CD4-positive, alpha-beta memory T cell (primary cell): ENCODE measurements at regions of chr6 and their contacts with region 1.

Region 1: GRCh38 chr6:122471107-122472021 is at the start of gene SERINC1:
- DNase-seq: peak; percentile 90 to 95 (median 94)
- H3K4me3 ChIP-seq: peak within 1 kb of the TSS; percentile 87 to 98
- H3K4me3 Mint-ChIP-seq: peak within 1 kb of the TSS; percentile 97 to 100 (median 100)
- H3K27ac ChIP-seq: peak within 1 kb of the TSS; percentile 99
- H3K27ac Mint-ChIP-seq: peak within 1 kb of the TSS; percentile 99 to 100 (median 100)
- H3K4me1 ChIP-seq: peaks cover 53% of the 10 kb centered on the region
- H3K4me1 Mint-ChIP-seq: peaks cover 29 to 58% (median 40%) of the 10 kb centered on the region in 4 donors
- H3K27me3 ChIP-seq: no peaks in the 10 kb centered on the region
- H3K27me3 Mint-ChIP-seq: no peaks in the 10 kb centered on the region
- total RNA-seq, gene SERINC1: 142 to 144 TPM

Region 2: DNA sequence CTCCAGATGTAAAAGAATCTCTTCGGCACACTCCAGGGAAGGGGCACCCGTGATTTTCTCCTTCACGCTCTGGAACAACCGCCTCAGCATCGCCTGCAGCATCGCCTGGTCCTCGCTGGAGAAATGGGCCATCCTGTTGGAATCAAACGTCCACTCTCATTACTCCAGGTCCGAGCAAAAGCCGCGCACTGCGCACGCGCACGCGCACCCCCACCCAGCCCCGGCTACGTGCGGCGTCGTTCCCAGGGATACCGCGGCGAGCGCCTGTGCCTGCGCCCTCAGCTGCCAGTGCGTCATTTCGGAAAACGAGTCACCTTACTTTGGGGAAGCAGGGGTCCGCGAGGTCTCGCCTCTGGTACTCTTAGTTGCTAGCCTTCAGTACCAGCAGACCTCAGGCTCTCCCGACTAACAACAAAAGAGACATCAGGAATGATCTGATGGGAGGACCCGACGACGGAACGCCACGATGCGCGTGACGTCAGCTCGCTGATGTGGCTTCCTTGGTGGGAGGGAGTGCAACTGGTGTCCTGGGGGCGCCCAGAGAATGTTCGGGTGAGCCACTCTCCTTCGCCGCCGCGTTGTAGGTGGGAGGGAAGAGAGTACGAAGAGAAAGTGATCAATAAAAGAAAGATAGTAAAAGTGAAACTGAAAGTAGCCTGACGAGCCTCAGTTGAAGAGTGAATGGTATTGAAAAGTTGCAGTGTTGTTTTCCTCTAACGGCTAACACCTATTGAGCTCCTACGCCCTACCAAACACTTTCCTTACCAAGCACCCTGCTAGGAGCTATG is 1136.9 kb before region 1 on chr6 and contains the start of gene TBC1D32:
- CTCF ChIA-PET with region 1: no interaction called
- POLR2A ChIA-PET with region 1: no interaction called
- intact Hi-C with region 1: loop called (anchors 1 kb)
- DNase-seq: peak; percentile 87 to 91 (median 89)
- H3K4me3 ChIP-seq: peak within 1 kb of the TSS; percentile 91 to 96
- H3K4me3 Mint-ChIP-seq: peak within 1 kb of the TSS; percentile 93 to 99 (median 97)
- H3K27ac ChIP-seq: peak within 1 kb of the TSS; percentile 98
- H3K27ac Mint-ChIP-seq: peak within 1 kb of the TSS; percentile 95 to 100 (median 99)
- H3K4me1 ChIP-seq: peaks cover 29% of the 10 kb centered on the region
- H3K4me1 Mint-ChIP-seq: peaks cover 14 to 38% (median 23%) of the 10 kb centered on the region in 4 donors
- H3K27me3 ChIP-seq: no peaks in the 10 kb centered on the region
- H3K27me3 Mint-ChIP-seq: no peaks in the 10 kb centered on the region
- total RNA-seq, gene TBC1D32: 11.2 to 13.2 TPM

Region 3: GRCh38 chr6:122381497-122382265 is 89.7 kb before region 1 on chr6:
- CTCF ChIA-PET with region 1: interaction called, 4 read pairs
- POLR2A ChIA-PET with region 1: no interaction called
- intact Hi-C with region 1: loop called (anchors 1 kb)
- DNase-seq: peak; percentile 65 to 70 (median 68)
- H3K4me3 ChIP-seq: no peak overlapping the region
- H3K4me3 Mint-ChIP-seq: no peak overlapping the region
- H3K27ac ChIP-seq: no peak overlapping the region
- H3K27ac Mint-ChIP-seq: peak overlapping the region in 1 of 7 donors; percentile 48
- H3K4me1 ChIP-seq: no peaks in the 10 kb centered on the region
- H3K4me1 Mint-ChIP-seq: peaks cover under 1 to 4% (median 3%) of the 10 kb centered on the region in 4 donors
- H3K27me3 ChIP-seq: no peaks in the 10 kb centered on the region
- H3K27me3 Mint-ChIP-seq: peaks cover 3% of the 10 kb centered on the region in 2 donors

Region 4: DNA sequence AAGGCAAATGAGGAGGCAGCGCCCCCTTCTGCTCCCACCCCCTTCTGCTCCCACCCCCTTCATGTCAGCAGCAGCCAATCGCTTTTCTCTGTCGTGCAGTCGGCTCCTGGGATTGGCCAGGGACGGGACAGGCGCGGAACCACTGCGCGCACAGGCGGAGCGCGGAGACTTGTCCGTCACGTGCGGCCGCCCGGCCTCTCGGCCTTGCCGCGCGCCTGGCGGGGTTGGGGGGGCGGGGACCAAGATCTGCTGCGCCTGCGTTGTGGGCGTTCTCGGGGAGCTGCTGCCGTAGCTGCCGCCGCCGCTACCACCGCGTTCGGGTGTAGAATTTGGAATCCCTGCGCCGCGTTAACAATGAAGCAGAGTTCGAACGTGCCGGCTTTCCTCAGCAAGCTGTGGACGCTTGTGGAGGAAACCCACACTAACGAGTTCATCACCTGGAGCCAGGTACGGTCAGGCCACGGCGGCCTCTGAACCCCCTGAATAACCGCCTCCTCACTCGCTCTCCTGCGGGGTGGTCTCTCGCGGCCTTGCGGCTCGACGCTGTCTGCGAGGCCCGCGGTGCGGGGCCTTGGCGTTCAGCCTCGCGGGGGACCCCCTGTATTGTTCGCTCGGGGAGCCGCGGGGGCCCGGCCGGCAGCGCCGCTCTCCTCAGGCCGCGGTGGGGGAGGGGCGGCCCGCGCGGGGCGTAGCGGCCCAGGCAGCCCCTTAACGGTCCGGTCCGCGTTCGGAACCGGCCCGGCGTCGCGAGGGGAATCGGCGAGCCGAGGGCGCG is 71.8 kb before region 1 on chr6 and contains the start of gene HSF2:
- CTCF ChIA-PET with region 1: interaction called, 4 read pairs
- POLR2A ChIA-PET with region 1: interaction called, 30 read pairs
- intact Hi-C with region 1: loop called (anchors 1 kb)
- DNase-seq: peak; percentile 92 to 96 (median 94)
- H3K4me3 ChIP-seq: peak within 1 kb of the TSS; percentile 39 to 91
- H3K4me3 Mint-ChIP-seq: peak within 1 kb of the TSS; percentile 96 to 100 (median 98)
- H3K27ac ChIP-seq: peak within 1 kb of the TSS; percentile 88
- H3K27ac Mint-ChIP-seq: peak within 1 kb of the TSS; percentile 92 to 99 (median 97)
- H3K4me1 ChIP-seq: peaks cover 36% of the 10 kb centered on the region
- H3K4me1 Mint-ChIP-seq: peaks cover 27 to 37% (median 31%) of the 10 kb centered on the region in 4 donors
- H3K27me3 ChIP-seq: no peaks in the 10 kb centered on the region
- H3K27me3 Mint-ChIP-seq: no peaks in the 10 kb centered on the region
- total RNA-seq, gene HSF2: 15.7 to 17.4 TPM

Region 5: DNA sequence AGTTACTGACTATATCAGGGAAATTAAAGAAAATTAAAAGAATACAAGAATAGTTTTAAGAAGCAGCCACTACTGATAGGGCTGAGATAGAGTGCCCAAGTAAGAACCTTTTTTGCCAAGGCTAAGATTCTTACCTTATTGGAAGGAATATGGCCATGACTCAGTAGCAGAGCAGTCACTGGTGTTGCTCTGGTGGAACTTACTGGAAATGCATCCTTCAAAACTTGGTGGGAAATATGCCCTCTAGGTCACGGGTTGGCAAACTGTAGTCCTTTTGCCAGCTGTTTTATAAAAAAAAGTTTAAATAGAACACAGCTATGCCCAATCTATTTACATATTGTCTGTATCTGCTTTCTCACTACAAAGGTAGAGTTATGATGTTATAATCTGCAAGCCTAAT is 65.9 kb before region 1 on chr6:
- CTCF ChIA-PET with region 1: no interaction called
- POLR2A ChIA-PET with region 1: interaction called, 23 read pairs
- intact Hi-C with region 1: loop called (anchors 2 kb)
- DNase-seq: no peak
- H3K4me3 ChIP-seq: no peak overlapping the region
- H3K4me3 Mint-ChIP-seq: no peak overlapping the region
- H3K27ac ChIP-seq: no peak overlapping the region
- H3K27ac Mint-ChIP-seq: peak overlapping the region in 1 of 7 donors; percentile 76
- H3K4me1 ChIP-seq: peaks cover 53% of the 10 kb centered on the region
- H3K4me1 Mint-ChIP-seq: peaks cover 49 to 80% (median 66%) of the 10 kb centered on the region in 4 donors
- H3K27me3 ChIP-seq: no peaks in the 10 kb centered on the region
- H3K27me3 Mint-ChIP-seq: no peaks in the 10 kb centered on the region

Region 6: DNA sequence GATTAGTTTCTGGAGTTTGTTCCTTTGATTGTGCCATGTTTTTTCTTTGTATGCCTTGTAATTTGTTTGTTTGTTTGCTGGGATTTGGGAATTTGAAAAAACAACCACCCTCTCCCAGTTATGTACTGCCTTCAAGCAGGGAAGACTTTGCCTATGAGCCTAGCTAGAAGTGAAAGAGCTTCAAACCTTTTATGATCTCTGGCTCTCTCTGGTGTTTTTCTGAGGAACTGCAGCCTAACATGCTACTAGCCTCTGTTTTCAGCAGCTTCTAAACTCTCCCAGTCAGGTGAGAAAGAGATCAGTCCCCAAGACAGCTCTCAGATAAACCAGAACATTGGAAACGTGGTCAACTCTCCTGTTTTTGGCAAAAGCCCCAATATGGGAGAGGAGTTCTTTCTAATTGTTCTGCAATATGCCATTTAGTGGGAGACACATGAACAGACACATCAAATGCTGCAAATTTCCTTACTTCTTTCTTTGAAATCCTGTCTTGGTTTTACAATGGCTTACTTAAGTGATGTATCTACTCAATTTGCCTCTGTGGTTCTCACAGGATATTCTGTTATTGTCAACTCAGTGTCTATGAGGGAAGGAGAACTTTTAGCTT is 59.2 kb after region 1 on chr6:
- CTCF ChIA-PET with region 1: interaction called, 56 read pairs
- POLR2A ChIA-PET with region 1: interaction called, 7 read pairs
- intact Hi-C with region 1: loop called (anchors 1 kb)
- DNase-seq: peak; percentile 57 to 70 (median 69)
- H3K4me3 ChIP-seq: no peak overlapping the region
- H3K4me3 Mint-ChIP-seq: no peak overlapping the region
- H3K27ac ChIP-seq: no peak overlapping the region
- H3K27ac Mint-ChIP-seq: no peak overlapping the region
- H3K4me1 ChIP-seq: no peaks in the 10 kb centered on the region
- H3K4me1 Mint-ChIP-seq: peaks cover 0 to 3% (median 1%) of the 10 kb centered on the region in 4 donors
- H3K27me3 ChIP-seq: peaks cover 2% of the 10 kb centered on the region
- H3K27me3 Mint-ChIP-seq: peaks cover 23 to 24% of the 10 kb centered on the region in 2 donors

Region 7: DNA sequence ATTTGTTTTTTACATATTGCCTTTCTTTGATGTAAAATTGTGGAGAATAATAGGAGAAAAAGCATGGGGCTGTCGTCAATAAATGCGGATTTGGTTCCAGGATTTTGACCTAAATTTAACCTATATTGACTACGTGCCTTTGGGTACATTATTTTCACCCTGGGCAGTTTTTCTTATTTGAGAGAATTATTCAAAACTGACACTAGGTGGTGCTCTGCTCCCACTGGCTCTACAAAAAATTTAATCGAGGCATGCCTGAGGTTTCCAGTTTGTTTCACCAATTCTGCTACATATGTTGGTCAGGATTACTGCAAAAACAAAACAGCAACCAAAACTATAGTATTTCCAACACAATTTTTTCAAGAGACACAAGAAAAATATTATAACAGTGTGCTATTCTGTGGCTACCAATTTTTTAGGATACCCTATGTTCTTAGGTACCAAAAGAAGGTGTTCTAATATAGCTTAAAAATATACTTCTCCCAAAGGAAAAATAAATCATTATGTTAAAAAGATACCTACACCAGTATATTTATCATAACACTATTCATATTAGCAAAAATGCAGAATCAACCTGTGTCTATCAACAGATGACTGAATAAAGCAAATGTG is 259.5 kb after region 1 on chr6:
- CTCF ChIA-PET with region 1: no interaction called
- POLR2A ChIA-PET with region 1: no interaction called
- intact Hi-C with region 1: loop called (anchors 10 kb)
- DNase-seq: peak in 2 of 5 donors; percentile 12 to 15
- H3K4me3 ChIP-seq: no peak overlapping the region
- H3K4me3 Mint-ChIP-seq: no peak overlapping the region
- H3K27ac ChIP-seq: no peak overlapping the region
- H3K27ac Mint-ChIP-seq: no peak overlapping the region
- H3K4me1 ChIP-seq: no peaks in the 10 kb centered on the region
- H3K4me1 Mint-ChIP-seq: no peaks in the 10 kb centered on the region
- H3K27me3 ChIP-seq: no peaks in the 10 kb centered on the region
- H3K27me3 Mint-ChIP-seq: peaks cover 0 to 3% of the 10 kb centered on the region in 2 donors